ENCODE measurements at regions of chr1 and their contacts with region 1.

Region 1: DNA sequence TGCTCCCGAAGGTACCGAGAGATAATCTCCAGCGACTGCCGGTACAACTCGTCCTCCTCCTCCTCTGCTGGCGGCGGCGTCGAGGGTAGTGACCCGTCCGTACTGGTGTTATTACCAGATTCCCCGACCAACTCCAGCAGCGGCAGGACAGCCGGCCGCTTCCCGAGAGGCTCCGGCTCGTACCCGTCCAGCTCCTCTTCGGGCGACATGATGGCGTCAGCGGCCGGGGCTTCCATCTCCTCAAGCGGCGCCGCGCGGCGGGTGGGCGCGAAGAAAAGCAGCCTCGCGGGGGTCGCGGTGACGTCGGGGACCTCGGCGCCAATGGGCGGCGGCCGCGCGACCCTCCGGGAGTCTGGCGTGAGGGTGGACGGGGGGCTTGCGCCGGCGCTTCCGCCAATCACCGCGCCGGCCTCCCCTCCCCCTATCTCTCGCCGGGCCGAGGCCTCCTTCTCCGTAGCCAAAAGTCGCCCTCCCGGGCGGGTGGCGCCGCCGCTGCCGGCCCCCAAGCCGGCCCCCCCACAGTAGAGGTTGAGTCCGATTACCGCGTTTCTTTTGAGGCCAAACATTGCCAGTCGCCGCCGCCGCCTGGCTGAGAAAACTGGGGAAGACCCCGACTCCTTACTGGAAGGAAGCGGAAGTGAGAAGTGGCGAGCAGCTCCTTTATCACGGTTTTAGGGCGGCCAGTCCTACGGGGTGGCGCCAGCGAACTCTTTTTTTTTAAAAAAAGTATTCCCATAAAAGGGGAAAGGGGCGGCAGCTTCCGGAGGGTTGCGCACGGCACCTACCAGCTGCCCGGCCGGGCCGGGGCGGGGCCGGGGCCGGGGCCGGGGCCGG is at the start of gene MCL1:
- DNase-seq: peak; percentile 94
- ATAC-seq: peak; percentile 80
- H3K4me3 ChIP-seq: peak within 1 kb of the TSS; percentile 76 to 100 (median 98)
- H3K4me3 Mint-ChIP-seq: peak within 1 kb of the TSS; percentile 99
- H3K27ac ChIP-seq: peak within 1 kb of the TSS; percentile 86 to 97
- H3K27ac Mint-ChIP-seq: peak within 1 kb of the TSS; percentile 97
- H3K4me1 ChIP-seq: peaks cover 29 to 39% of the 10 kb centered on the region in 2 donors
- H3K4me1 Mint-ChIP-seq: peaks cover 51% of the 10 kb centered on the region
- H3K27me3 ChIP-seq: no peaks in the 10 kb centered on the region
- H3K27me3 Mint-ChIP-seq: no peaks in the 10 kb centered on the region
- CTCF ChIP-seq: no peak
- total RNA-seq, gene MCL1: 214 and 219 TPM in 2 replicates

Region 2: DNA sequence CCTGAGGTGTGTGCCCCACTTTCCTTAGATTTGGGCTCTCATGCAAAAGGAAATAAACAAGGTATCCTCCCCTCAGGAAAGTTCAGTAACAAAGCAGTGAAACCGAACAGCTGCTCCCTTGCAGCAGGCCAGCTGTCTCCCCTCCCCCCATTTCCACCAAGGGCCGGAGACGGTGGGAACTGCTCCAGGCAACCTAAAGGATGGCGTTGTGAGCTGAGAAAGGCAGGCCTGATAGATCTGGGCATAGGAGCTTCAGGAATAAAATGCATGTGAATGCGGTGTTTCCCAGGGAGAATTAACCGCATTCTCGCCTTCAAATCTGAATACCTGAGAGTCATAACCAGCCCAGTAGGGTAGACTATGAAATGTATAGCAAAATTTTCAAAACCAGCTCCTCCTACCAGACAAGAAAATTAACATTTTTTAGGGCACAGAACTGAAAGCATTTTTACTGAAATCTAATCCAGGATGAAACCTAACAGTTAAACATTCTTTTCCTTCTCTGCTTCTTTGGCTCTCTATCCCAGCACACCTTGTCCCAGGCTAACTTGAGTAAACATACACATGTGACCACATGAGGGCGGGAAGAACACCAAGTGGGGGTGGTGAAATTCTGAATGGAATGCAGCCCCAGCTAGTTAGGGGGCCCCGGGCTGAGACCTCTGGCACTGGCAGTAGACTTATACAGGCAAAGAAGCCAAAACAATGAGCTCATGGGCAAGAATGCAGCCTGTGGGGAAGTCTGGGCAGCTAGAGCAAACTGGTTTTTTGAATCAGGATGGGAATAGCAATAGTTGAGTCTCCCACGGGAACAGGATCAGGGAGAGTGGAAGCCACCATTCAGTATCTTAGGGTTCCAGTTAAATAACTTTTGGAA is 11.2 kb before region 1 on chr1:
- CTCF ChIA-PET with region 1: interaction called, 497 read pairs
- POLR2A ChIA-PET with region 1: interaction called, 371 read pairs
- intact Hi-C with region 1: no loop called
- DNase-seq: peak; percentile 47
- ATAC-seq: no peak
- H3K4me3 ChIP-seq: peak overlapping the region; percentile 31 to 67 (median 53)
- H3K4me3 Mint-ChIP-seq: peak overlapping the region; percentile 80
- H3K27ac ChIP-seq: peak overlapping the region; percentile 96 to 99
- H3K27ac Mint-ChIP-seq: peak overlapping the region; percentile 94
- H3K4me1 ChIP-seq: peaks cover 97 to 100% of the 10 kb centered on the region in 2 donors
- H3K4me1 Mint-ChIP-seq: peaks cover 78% of the 10 kb centered on the region
- H3K27me3 ChIP-seq: no peaks in the 10 kb centered on the region
- H3K27me3 Mint-ChIP-seq: no peaks in the 10 kb centered on the region
- CTCF ChIP-seq: no peak

Region 3: GRCh38 chr1:150613061-150613920 is 34.1 kb after region 1 on chr1:
- CTCF ChIA-PET with region 1: interaction called, 157 read pairs
- POLR2A ChIA-PET with region 1: interaction called, 4 read pairs
- intact Hi-C with region 1: loop called (anchors 1 kb)
- DNase-seq: peak; percentile 74
- ATAC-seq: peak; percentile 55
- H3K4me3 ChIP-seq: no peak overlapping the region
- H3K4me3 Mint-ChIP-seq: peak overlapping the region; percentile 72
- H3K27ac ChIP-seq: peak overlapping the region; percentile 44 to 95
- H3K27ac Mint-ChIP-seq: peak overlapping the region; percentile 92
- H3K4me1 ChIP-seq: peaks cover 35 to 41% of the 10 kb centered on the region in 2 donors
- H3K4me1 Mint-ChIP-seq: peaks cover 44% of the 10 kb centered on the region
- H3K27me3 ChIP-seq: no peaks in the 10 kb centered on the region
- H3K27me3 Mint-ChIP-seq: no peaks in the 10 kb centered on the region
- CTCF ChIP-seq: no peak

Region 4: GRCh38 chr1:150621497-150622302 is 42.5 kb after region 1 on chr1:
- CTCF ChIA-PET with region 1: interaction called, 157 read pairs
- POLR2A ChIA-PET with region 1: interaction called, 11 read pairs
- intact Hi-C with region 1: loop called (anchors 1 kb)
- DNase-seq: peak; percentile 77
- ATAC-seq: peak; percentile 63
- H3K4me3 ChIP-seq: no peak overlapping the region
- H3K4me3 Mint-ChIP-seq: no peak overlapping the region
- H3K27ac ChIP-seq: peak overlapping the region; percentile 31 to 74
- H3K27ac Mint-ChIP-seq: peak overlapping the region; percentile 80
- H3K4me1 ChIP-seq: peaks cover 24 to 31% of the 10 kb centered on the region in 2 donors
- H3K4me1 Mint-ChIP-seq: peaks cover 30% of the 10 kb centered on the region
- H3K27me3 ChIP-seq: no peaks in the 10 kb centered on the region
- H3K27me3 Mint-ChIP-seq: no peaks in the 10 kb centered on the region
- CTCF ChIP-seq: peak; percentile 87

Measured in B cell (primary cell).